ENCODE measurements at regions of chr7 and their contacts with region 1.

Region 1: DNA sequence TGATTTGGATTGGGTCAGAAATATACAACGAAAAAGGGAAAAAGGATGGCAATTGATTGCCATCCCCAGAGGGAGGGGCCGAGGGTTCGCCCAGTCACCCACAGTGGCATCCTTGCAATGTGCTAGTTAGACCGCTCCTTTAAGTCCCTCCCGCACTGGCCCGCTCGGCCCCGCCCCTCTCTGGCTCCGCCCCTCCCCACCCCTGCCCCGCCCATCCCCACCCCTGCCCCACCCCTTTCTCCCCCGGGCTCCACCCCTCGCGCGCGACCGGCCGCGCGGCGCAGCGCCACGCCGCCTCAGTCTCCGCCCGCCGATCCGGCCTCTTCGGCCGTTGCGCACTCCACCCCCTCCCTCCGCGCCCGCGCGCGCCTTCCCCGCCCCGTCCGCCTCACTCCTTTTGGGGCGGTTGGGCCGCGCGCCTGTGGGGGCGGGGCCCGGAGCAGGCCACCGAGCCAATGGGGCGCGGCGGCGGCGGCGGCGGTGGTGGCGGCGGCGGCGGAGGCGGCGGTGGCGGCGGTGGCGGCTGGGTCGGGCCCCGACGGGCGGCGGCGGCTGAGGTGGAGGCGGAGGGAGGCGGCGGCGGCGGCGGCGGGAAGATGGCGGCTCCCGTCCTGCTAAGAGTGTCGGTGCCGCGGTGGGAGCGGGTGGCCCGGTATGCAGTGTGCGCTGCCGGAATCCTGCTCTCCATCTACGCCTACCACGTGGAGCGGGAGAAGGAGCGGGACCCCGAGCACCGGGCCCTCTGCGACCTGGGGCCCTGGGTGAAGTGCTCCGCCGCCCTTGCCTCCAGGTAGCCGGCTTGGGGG is at the start of gene VKORC1L1:
- DNase-seq: peak; percentile 98
- total RNA-seq, gene VKORC1L1: 18.7 TPM

Region 2: DNA sequence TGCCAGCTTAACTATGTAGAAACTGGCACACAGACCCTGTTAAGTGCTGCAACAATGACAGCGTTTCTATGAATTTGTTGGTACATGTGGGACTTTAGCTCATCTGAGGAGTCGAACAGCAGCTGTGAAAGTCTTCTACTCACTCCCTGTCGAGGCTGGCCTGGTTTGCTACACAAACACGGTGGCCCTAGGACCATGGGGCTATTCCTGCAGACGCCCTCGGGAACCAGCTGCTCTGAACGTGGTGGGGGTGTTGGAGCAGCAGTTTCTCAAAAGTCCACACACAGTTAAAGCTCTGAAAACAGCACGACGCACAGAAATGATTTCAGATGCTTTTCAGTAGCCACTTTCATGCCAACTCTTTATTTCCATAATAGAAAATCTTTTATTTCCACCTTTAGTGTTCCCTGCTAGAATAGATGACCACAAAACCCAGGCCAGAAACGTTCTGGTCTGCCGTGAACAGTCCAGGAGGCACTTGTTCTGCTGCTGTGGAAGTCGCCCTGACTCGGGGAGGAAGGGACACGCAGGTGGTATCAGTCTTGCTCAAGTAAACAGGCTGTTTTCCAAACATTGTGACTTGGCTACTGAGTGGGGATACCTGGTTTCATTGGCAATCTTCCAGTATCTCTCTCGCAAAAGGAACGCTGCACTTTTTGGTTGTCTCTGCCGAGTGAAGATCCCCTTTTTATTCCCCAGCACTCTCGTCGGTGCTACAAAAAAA is 87.5 kb after region 1 on chr7:
- intact Hi-C with region 1: no loop called
- DNase-seq: no peak

Region 3: DNA sequence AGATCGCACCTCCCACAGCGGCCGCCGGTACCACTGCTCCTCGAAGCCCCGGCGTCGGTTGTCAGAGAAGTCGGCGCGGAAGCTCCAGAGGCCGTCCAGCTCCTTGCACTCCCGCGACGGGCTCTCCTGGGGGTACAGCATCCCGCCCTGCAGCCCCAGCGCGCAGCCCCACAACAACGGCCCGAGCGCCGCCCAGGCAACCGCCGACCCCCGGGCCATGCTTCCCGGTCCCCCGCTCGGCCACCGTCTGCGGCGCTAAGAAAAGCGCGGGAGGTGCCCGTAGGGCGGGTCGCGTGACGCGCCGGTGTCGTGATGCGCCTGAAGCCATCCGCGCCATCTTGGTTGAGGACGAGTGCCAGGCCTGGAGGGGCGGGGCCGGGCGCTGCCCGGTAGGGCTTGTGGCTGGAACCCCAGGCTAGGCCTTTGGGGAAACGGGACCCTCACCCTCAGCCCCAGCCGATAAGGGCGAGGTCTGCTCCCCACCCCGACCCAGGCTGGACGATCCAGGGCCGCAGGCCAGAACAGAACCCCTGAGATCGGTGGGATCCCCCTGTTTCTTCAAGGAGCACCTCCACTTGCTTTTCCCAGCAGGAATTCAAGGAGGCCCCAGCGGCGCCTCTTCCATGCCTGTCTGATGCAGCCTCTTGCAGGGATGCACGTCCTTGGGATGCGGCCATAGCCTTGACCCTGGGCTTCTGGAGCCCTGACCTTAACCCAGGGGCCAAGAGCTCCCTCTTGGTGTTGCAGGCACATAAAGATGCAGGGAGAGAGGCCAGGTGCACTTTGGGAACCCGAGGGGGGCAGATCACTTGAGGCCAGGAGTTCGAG is 109.2 kb after region 1 on chr7 and contains the start of gene GUSB:
- intact Hi-C with region 1: loop called (anchors 10 kb)
- DNase-seq: peak; percentile 97
- total RNA-seq, gene GUSB: 15.8 TPM

Region 4: DNA sequence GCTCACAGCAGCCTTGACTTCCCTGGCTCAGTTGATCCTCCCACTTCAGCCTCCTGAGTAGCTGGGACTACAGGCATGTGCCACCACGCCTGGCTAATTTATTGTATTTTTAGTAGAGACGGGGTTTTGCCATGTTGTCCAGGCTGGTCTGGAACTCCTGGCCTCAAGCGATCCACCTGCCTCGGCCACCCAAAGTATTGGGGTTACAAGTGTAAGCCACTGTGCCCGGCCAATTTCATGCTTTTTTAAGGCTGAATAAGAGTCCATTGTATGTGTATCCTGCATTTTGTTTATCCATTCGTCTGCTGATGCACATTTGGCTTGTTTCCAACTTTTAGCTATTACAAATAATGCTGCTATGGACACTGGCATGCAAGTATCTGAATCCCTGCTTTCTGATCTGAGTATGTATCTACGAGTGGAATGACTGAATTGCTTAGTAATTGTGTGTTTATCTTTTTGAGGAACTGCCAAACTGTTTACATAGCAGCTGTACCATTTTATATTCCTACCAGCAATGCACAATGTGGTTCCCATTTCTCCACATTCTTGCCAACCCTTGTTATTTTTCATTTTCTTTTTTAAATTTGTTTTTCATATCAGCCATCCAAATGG is 294.9 kb after region 1 on chr7:
- intact Hi-C with region 1: no loop called
- DNase-seq: no peak

Measured in cardiac septum (tissue), 1 donor.